SK-N-SH (cell line): ENCODE measurements at regions of chr17 and their contacts with region 1.

Region 1: DNA sequence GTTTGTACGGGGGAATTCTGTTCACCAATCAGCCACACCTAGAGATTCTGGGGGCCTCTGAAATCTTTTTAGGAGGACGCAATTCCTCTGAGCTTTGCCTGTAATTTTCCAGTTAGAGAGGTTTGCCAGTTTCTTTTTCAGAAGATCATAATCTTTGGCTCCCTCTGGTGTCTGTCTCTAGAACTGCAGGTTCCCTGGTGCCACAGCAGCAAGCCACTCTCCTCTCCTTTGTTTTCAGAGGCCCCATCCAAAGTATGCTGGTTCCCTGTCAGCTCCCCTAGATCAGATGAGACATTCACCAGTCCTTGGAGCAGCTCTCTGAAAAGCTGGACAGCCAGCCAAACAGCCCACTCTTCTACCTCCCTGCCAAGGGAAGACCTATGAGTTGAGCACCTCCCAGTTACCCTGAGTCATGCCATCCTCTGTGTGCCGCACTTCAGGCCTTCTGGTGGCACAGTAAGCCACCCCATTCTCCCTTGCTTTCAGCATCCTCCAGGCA is 36.1 kb downstream of the RNF112 start:
- DNase-seq: peak; percentile 84
- H3K4me3 ChIP-seq: no peak overlapping the region; a peak in 1 of 4 replicates
- H3K27ac ChIP-seq: peak overlapping the region; percentile 70 to 82
- H3K4me1 ChIP-seq: peaks cover 9 to 27% of the 10 kb centered on the region in 2 experiments
- H3K27me3 ChIP-seq: no peaks in the 10 kb centered on the region
- CTCF ChIP-seq: peak; percentile 93
- EP300 ChIP-seq: no peak
- RAD21 ChIP-seq: peak; percentile 98

Region 2: GRCh38 chr17:19317359-19318095 is 129.6 kb before region 1 on chr17:
- CTCF ChIA-PET with region 1: no interaction called
- POLR2A ChIA-PET with region 1: no interaction called
- DNase-seq: no peak
- H3K4me3 ChIP-seq: no peak overlapping the region
- H3K27ac ChIP-seq: no peak overlapping the region
- H3K4me1 ChIP-seq: no peaks in the 10 kb centered on the region; a peak in 1 of 4 replicates
- H3K27me3 ChIP-seq: no peaks in the 10 kb centered on the region
- CTCF ChIP-seq: no peak
- EP300 ChIP-seq: no peak
- RAD21 ChIP-seq: no peak

Region 3: GRCh38 chr17:19362277-19363113 is 84.6 kb before region 1 on chr17 and contains the start of gene B9D1:
- CTCF ChIA-PET with region 1: interaction called, 305 read pairs
- POLR2A ChIA-PET with region 1: interaction called, 13 read pairs
- DNase-seq: peak; percentile 99
- H3K4me3 ChIP-seq: peak within 1 kb of the TSS; percentile 72 to 75
- H3K27ac ChIP-seq: peak within 1 kb of the TSS; percentile 83 to 88
- H3K4me1 ChIP-seq: peaks cover 13 to 32% of the 10 kb centered on the region in 2 experiments; a peak in 2 of 4 replicates
- H3K27me3 ChIP-seq: no peaks in the 10 kb centered on the region
- CTCF ChIP-seq: peak; percentile 89
- EP300 ChIP-seq: no peak; a peak in 1 of 4 replicates
- RAD21 ChIP-seq: peak; percentile 97
- polyA plus RNA-seq, gene B9D1: 75.0 and 81.6 TPM in 2 replicates

Region 4: DNA sequence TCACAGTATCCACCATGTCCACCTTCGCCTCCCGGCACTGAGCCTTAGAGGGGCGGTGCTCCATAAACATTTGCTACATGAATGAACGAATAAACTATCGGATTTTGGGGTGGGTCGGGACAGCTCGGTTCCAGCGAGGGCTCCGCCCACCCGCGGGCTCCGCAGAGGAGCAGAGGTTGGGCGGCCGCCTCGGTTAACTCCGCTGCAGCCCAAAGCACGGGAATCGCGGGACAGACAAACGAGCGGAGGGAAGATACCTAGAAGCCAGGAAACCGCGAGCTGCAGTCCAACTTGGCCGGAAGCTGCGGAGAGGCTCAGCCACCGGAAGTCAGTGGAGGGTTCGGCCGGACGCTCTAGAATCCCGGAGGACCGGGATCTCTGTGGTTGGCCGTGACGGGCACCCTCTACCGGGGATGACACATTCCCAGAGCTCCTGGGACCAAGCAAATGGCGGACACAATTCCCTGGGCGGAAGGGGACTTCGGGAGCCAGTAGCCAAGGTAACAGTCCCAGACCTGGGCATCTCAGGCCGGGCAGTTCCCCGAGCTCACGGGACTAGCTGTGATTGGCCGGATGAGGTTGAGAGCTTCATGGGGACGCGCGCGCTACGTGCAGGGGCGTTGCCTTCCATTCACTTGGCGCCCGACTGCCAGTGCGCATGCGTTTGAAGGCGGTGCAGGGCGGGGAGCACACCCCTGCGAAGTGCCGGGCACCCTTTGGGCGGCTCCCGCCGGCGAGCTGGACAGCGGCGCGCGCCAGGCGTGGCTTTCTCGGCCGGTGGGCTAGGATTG is 69.3 kb before region 1 on chr17:
- CTCF ChIA-PET with region 1: interaction called, 19 read pairs
- POLR2A ChIA-PET with region 1: interaction called, 5 read pairs
- DNase-seq: peak; percentile 98
- H3K4me3 ChIP-seq: peak overlapping the region; percentile 87 to 88
- H3K27ac ChIP-seq: peak overlapping the region; percentile 94 to 95
- H3K4me1 ChIP-seq: peaks cover 0 to 25% of the 10 kb centered on the region in 2 experiments; a peak in 3 of 4 replicates
- H3K27me3 ChIP-seq: no peaks in the 10 kb centered on the region
- CTCF ChIP-seq: 0 out of 2 replicates have a peak, but pooled peaks have one; percentile 9
- EP300 ChIP-seq: no peak; a peak in 1 of 4 replicates
- RAD21 ChIP-seq: no peak; the same call in 1 of the 2 replicates

Region 5: GRCh38 chr17:19398301-19399181 is 48.6 kb before region 1 on chr17:
- CTCF ChIA-PET with region 1: interaction called, 10 read pairs
- POLR2A ChIA-PET with region 1: no interaction called
- DNase-seq: peak; percentile 57
- H3K4me3 ChIP-seq: no peak overlapping the region
- H3K27ac ChIP-seq: peak overlapping the region in 1 of 2 experiments; percentile 62; a peak in 2 of 4 replicates
- H3K4me1 ChIP-seq: peaks cover 13 to 35% of the 10 kb centered on the region in 2 experiments; a peak in 3 of 4 replicates
- H3K27me3 ChIP-seq: no peaks in the 10 kb centered on the region
- CTCF ChIP-seq: no peak
- EP300 ChIP-seq: no peak
- RAD21 ChIP-seq: no peak

Region 6: DNA sequence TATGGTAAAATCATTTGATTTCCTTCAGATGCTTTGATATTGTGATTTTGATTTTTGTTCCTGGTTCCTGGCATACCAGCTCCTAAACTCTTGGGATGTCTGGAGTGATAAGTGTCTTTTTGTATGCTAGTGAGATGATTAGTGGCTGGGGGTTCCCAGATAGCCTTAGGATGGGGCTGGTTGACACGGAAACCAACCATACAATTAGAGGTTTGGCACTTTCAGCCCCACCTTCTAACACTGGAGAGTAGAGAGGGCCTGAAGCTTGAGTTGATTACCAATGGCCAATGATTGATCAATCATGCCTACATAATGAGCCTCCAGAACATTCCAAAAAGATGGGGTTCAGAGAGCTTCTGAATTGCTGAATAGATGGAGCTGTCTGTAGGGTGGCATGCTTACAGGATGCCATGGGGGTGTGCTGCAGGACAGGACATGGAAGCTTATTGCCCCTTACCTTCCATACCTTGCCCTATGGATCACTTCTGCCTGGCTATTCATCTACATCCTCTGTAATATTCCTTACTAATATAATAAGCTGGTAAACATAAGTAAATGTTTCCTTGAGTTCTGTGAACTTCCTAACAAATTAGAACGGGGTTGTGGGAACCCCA is 13.3 kb before region 1 on chr17:
- CTCF ChIA-PET with region 1: interaction called, 18 read pairs
- POLR2A ChIA-PET with region 1: no interaction called
- DNase-seq: no peak
- H3K4me3 ChIP-seq: no peak overlapping the region
- H3K27ac ChIP-seq: no peak overlapping the region
- H3K4me1 ChIP-seq: peaks cover 0 to 7% of the 10 kb centered on the region in 2 experiments; a peak in 1 of 4 replicates
- H3K27me3 ChIP-seq: no peaks in the 10 kb centered on the region
- CTCF ChIP-seq: no peak
- EP300 ChIP-seq: no peak
- RAD21 ChIP-seq: no peak

Region 7: DNA sequence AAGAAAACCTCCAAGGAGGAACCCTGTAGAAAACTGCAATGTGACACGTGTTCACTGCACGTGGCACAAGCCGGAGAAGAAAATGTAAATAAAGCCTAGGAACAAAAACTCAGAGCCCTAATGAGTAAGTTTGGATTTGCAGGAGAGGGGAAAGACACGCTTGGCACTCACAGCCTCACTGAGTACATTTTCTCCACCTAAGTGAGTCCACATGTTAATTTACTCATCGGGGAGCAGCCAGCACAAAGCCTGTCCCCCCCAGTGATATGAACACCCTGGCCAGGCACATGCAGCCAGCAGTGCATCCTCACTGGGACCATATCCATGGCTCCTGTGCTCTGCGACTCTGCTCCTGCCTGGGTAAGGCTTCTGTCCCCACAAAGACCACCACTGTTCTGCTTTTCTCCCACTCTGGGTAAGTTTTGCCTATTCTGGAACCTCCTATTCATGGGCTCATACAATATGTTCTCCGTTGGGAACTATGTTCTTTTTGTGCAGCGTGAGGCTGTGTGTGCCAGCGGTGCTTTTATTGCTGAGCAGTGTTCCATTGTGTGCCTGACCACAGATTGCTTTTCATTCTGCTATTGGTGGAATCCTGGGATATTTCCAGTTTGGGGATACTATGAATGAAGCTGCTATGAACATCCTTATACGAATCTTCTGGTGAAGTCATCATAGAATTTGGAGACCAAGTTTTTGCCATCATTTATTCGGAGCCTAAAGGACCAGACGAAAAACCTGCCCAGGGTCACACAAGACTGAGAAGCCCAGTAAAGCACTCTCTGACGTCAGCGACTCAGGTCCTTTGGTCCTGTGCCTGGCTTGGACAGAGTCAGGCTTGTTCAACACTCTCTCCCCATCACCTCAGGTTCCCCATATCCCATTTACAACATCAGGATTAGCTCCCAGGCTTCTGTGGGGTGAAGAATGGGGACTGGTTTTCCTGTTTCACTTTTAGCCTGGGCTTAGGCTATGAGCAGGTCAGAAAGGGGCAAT is 17.2 kb after region 1 on chr17:
- CTCF ChIA-PET with region 1: interaction called, 10 read pairs
- POLR2A ChIA-PET with region 1: no interaction called
- DNase-seq: no peak
- H3K4me3 ChIP-seq: no peak overlapping the region
- H3K27ac ChIP-seq: no peak overlapping the region
- H3K4me1 ChIP-seq: no peaks in the 10 kb centered on the region; a peak in 1 of 4 replicates
- H3K27me3 ChIP-seq: no peaks in the 10 kb centered on the region
- CTCF ChIP-seq: no peak
- EP300 ChIP-seq: no peak
- RAD21 ChIP-seq: no peak

Region 8: GRCh38 chr17:20206068-20206467 is 758.9 kb after region 1 on chr17:
- CTCF ChIA-PET with region 1: no interaction called
- POLR2A ChIA-PET with region 1: no interaction called
- DNase-seq: no peak
- H3K4me3 ChIP-seq: no peak overlapping the region
- H3K27ac ChIP-seq: peak overlapping the region in 1 of 2 experiments; percentile 67; a peak in 3 of 4 replicates
- H3K4me1 ChIP-seq: peaks cover 0 to 6% of the 10 kb centered on the region in 2 experiments; a peak in 2 of 4 replicates
- H3K27me3 ChIP-seq: no peaks in the 10 kb centered on the region
- CTCF ChIP-seq: no peak
- EP300 ChIP-seq: no peak
- RAD21 ChIP-seq: no peak